Sigmoid colon (tissue), 7 donors: ENCODE measurements at regions of chr11 and their contacts with region 1.

Region 1: GRCh38 chr11:77820563-77821348 is at the starts of genes AAMDC and RSF1:
- DNase-seq: peak; percentile 99
- H3K4me3 ChIP-seq: peak within 1 kb of the TSS; percentile 64 to 100 (median 98)
- H3K27ac ChIP-seq: peak within 1 kb of the TSS; percentile 85 to 99 (median 98)
- H3K4me1 ChIP-seq: peaks cover 0 to 68% (median 51%) of the 10 kb centered on the region in 4 donors
- H3K27me3 ChIP-seq: no peaks in the 10 kb centered on the region
- CTCF ChIP-seq: peak; percentile 28 to 62 (median 52)
- EP300 ChIP-seq: no peak
- POLR2A ChIP-seq: peak; percentile 75 to 81
- total RNA-seq, gene AAMDC: 29.1 to 66.7 (median 43.7) TPM
- total RNA-seq, gene RSF1: 61.5 to 90.7 (median 75.6) TPM

Region 2: DNA sequence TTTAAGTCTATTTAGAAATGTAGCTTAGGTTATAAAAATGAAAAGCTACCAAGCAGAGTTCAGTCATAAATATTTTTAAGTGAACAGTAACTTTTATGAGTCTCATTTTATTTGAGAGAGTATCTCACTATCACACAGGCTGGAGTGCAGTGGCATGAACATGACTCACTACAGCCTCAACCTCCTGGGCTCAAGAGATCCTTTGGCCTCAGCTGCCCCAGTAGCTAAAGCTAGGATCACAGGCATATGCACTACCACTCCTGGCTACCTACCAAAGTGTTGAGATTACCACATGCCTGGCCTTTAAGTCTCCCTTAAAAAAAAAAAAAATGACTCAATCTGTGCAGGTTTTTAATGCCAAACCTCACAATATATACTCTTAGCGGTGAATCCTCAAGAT is 148.5 kb before region 1 on chr11:
- intact Hi-C with region 1: loop called (anchors 10 kb)
- DNase-seq: no peak
- H3K4me3 ChIP-seq: no peak overlapping the region
- H3K27ac ChIP-seq: peak overlapping the region in 3 of 4 donors; percentile 6 to 29 (median 27)
- H3K4me1 ChIP-seq: peaks cover 0 to 6% (median 0%) of the 10 kb centered on the region in 4 donors
- H3K27me3 ChIP-seq: no peaks in the 10 kb centered on the region
- CTCF ChIP-seq: no peak
- EP300 ChIP-seq: no peak
- POLR2A ChIP-seq: no peak

Region 3: GRCh38 chr11:77908835-77909234 is 88.1 kb after region 1 on chr11:
- intact Hi-C with region 1: loop called (anchors 10 kb)
- DNase-seq: no peak
- H3K4me3 ChIP-seq: no peak overlapping the region
- H3K27ac ChIP-seq: no peak overlapping the region
- H3K4me1 ChIP-seq: peaks cover 0 to 12% (median 5%) of the 10 kb centered on the region in 4 donors
- H3K27me3 ChIP-seq: no peaks in the 10 kb centered on the region
- CTCF ChIP-seq: no peak
- EP300 ChIP-seq: no peak
- POLR2A ChIP-seq: no peak

Region 4: DNA sequence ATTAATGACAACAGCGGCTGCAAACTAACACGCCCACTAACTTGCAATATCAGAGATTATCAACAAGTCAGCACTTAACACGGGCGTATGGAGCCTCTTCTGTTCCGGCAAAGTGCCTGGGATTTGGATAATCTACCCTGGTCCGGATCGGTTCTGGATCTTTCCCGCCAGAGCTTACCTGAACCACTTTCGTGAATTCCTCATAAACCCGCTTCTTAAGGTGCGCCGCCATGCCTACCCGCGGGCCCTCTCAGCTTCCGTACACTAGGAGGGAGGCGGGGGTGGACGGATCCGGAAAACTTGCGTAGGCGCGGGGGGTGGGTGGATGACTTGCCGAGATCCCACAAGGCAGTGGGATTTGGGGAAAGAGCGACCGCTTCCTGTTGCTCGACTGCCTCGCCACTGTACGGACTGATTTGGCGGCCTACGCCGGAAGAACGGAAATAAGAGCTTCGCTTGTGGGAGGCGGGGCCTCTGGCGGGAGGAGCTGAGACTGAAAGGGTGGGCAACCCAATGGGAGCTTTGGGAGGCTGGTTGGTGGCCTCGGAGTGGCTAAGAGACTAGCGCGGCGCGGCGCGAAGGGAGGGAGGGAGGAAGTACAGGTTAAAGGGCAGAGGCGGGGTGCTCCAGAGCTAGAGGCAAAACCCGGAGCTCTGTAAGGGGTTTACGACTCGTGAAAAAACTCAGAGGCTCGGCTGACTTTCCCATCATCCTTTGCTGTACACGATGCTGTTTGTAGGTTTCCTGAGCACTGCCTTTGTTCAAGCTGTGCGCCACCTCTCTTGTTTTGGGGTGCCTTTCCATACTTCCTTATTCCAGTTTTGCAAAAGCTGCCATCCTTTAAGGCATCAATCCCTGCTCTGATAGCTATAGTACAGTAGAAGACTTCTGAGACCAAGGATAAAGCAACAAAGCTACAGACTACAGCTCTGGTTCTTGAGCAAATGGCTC is 173.9 kb after region 1 on chr11 and contains the start of gene INTS4:
- intact Hi-C with region 1: loop called (anchors 2 kb)
- DNase-seq: peak; percentile 100
- H3K4me3 ChIP-seq: peak within 1 kb of the TSS; percentile 60 to 69 (median 63)
- H3K27ac ChIP-seq: peak within 1 kb of the TSS; percentile 80 to 88 (median 84)
- H3K4me1 ChIP-seq: peaks cover 0 to 24% (median 19%) of the 10 kb centered on the region in 4 donors
- H3K27me3 ChIP-seq: no peaks in the 10 kb centered on the region
- CTCF ChIP-seq: no peak
- EP300 ChIP-seq: peak in 2 of 4 donors; percentile 37 to 47
- POLR2A ChIP-seq: no peak
- total RNA-seq, gene INTS4: 26.3 to 32.1 (median 29.8) TPM